Aorta (tissue), 5 donors: ENCODE measurements at regions of chr6 and their contacts with region 1.

Region 1: DNA sequence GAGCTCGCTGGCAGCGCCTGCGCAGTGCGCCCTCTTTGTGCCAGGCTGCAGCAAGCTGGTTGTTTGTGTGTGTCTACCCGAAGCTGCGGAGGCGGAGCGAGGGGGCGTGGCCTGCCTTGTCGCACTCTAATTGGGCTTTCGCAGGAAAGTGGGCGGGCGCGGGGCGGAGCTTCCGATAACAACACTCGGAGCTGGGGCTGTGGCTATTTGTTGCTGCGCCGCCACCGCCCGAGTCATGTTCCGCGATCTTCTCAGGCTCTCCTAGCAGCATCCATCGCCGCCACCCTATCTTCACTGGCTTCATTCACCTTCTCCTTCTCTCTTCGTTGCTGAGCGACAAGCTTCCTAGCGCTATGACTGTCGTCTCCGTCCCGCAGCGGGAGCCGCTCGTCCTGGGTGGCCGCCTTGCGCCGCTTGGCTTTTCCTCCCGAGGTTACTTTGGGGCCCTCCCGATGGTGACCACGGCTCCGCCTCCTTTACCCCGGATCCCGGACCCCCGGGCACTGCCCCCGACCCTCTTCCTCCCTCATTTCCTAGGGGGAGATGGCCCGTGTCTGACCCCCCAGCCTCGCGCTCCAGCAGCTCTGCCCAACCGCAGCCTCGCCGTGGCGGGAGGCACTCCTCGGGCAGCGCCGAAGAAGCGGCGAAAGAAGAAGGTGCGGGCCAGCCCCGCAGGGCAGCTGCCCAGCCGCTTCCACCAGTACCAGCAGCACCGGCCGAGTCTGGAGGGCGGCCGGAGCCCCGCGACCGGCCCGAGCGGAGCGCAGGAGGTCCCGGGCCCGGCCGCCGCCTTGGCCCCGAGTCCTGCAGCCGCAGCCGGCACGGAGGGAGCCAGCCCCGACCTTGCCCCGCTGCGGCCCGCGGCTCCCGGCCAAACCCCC is at the start of gene PNRC1:
- DNase-seq: peak; percentile 100
- ATAC-seq: peak; percentile 96
- H3K4me3 ChIP-seq: peak within 1 kb of the TSS; percentile 89 to 95
- H3K27ac ChIP-seq: peak within 1 kb of the TSS; percentile 99 to 100
- H3K4me1 ChIP-seq: peaks cover 0 to 2% of the 10 kb centered on the region in 2 donors
- H3K27me3 ChIP-seq: no peaks in the 10 kb centered on the region
- total RNA-seq, gene PNRC1: 280 to 342 TPM

Region 2: DNA sequence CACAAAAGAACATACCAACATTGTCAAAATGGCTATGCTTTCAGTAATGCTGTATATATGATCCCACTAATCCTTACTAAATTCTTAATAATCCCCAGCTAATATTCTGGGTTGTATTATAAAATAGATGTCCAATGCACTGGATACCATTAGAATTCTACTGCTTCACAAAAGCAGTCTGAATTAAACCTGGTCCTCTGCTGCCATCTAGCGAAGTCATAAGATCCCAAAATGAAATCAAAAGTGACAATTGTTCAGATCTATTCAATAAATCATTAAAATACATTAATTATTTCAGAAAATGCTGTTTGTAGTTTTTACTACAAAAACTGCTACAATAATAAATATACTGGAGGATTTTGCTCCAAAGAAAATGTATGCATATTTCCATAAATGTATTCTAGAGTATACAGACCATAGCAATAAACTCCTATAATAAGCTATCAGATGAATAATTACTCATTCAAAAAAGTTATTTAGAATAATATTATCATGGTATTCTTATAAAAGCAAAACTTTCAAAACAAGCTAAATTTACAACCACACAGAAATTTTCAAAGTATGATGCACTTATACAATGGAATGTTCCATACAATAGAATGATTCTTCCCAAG is 210.0 kb before region 1 on chr6:
- intact Hi-C with region 1: no loop called
- DNase-seq: no peak
- ATAC-seq: peak; percentile 83
- H3K4me3 ChIP-seq: no peak overlapping the region
- H3K27ac ChIP-seq: no peak overlapping the region
- H3K4me1 ChIP-seq: peaks cover 0 to 9% of the 10 kb centered on the region in 2 donors
- H3K27me3 ChIP-seq: no peaks in the 10 kb centered on the region

Region 3: GRCh38 chr6:88982720-88983119 is 98.1 kb before region 1 on chr6:
- intact Hi-C with region 1: loop called (anchors 2 to 5 kb)
- DNase-seq: peak in 1 of 2 donors; percentile 65
- ATAC-seq: peak; percentile 94
- H3K4me3 ChIP-seq: no peak overlapping the region
- H3K27ac ChIP-seq: no peak overlapping the region
- H3K4me1 ChIP-seq: no peaks in the 10 kb centered on the region
- H3K27me3 ChIP-seq: no peaks in the 10 kb centered on the region

Region 4: GRCh38 chr6:89035252-89036106 is 45.3 kb before region 1 on chr6:
- intact Hi-C with region 1: loop called in 1 of 2 experiments (anchors 5 kb)
- DNase-seq: peak; percentile 89 to 90
- ATAC-seq: peak; percentile 94
- H3K4me3 ChIP-seq: no peak overlapping the region
- H3K27ac ChIP-seq: peak overlapping the region in 1 of 2 donors; percentile 82
- H3K4me1 ChIP-seq: peaks cover 0 to 6% of the 10 kb centered on the region in 2 donors
- H3K27me3 ChIP-seq: no peaks in the 10 kb centered on the region

Region 5: DNA sequence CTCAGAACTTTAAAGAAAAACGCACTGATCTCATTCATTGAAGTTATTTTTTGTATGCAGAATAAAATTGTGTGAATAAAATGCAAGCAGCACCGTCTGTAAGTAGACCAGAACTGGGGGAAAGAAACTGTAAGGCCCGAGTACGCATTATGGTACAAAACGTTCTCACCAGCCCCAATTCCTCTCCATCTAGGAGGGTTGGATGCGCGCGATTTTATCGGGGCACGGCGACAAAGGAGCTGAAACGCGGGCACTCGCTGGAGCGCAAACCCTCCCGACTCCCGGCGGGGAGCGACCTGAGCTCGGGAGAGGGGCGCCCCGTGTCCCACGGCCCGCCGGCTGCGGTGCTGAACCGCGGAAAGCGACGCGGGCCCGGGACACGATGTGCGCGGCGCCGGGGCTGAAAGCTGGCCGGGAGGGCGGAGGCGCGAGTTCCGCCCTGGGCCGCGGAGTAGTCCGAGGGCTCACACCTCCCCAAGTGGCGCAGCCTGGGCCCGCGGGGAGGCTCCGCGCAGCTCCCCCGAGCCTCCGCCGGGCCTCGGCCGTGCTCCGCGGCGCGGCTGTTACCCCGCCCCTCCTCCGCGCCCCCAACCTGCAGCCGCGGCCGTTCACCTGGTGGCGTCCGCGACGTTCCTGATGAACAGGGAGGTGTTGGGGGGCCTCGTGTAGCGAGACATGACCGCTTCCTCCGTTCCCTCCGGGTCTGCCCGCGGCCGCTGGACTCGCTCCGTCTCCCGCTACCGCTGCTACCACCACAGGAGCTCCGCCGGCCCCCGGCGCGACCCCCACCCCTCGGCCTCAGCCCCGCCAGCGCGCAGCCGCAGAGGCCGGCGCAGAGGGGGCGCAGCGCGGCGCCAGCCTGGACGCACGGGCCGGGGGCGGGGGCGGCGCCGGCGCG is 36.7 kb after region 1 on chr6 and contains the start of gene SRSF12:
- intact Hi-C with region 1: loop called (anchors 5 kb)
- DNase-seq: peak; percentile 57 to 88
- ATAC-seq: peak; percentile 80
- H3K4me3 ChIP-seq: peak within 1 kb of the TSS; percentile 79 to 82
- H3K27ac ChIP-seq: no peak within 1 kb of the TSS
- H3K4me1 ChIP-seq: no peaks in the 10 kb centered on the region
- H3K27me3 ChIP-seq: no peaks in the 10 kb centered on the region
- total RNA-seq, gene SRSF12: 1.6 to 1.9 TPM

Region 6: GRCh38 chr6:89352278-89353117 is 271.7 kb after region 1 on chr6 and contains the start of gene UBE2J1:
- intact Hi-C with region 1: loop called in 1 of 2 experiments (anchors 5 kb)
- DNase-seq: peak; percentile 98 to 99
- ATAC-seq: peak; percentile 98
- H3K4me3 ChIP-seq: peak within 1 kb of the TSS; percentile 64 to 99
- H3K27ac ChIP-seq: peak within 1 kb of the TSS; percentile 88 to 100
- H3K4me1 ChIP-seq: peaks cover 0 to 1% of the 10 kb centered on the region in 2 donors
- H3K27me3 ChIP-seq: no peaks in the 10 kb centered on the region
- total RNA-seq, gene UBE2J1: 34.1 to 38.7 TPM